ENCODE measurements at regions of chr20 and their contacts with region 1.

Region 1: DNA sequence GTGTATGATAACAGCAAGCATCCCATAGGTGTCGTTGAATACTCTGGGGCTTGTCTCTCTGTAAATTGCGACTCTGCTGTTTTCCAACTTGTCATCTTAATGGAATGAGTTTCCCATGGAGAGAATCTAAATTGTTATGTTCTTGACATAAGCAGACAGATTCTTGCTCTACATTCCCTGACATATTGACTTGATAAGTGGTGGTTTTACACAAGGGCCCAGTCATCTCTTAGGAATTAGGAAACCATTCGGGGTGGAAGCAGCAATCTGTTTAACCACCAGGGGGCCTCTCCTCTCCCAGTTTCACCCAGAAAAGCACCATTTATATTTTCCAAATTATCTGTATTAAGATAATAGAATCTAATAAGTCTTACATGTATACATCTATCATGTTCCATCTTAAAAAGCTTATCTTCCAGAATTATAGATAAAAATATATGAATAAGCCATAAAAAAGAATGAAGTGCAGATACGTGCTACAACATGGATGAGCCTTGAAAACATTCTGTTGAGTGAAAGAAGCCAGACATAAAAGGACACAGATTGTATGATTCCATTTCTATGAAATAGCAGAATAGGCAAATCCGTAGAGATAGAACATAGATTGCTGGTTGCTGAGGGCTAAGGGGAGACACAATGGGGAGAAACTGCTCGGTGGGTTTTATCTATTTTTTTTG is 23.1 kb upstream of the MROH8 start:
- DNase-seq: peak; percentile 87
- H3K4me3 ChIP-seq: no peak overlapping the region
- CTCF ChIP-seq: peak; percentile 86

Region 2: GRCh38 chr20:37251825-37252477 is 49.5 kb after region 1 on chr20:
- in situ Hi-C with region 1: no loop called
- DNase-seq: no peak
- H3K4me3 ChIP-seq: no peak overlapping the region
- CTCF ChIP-seq: no peak

Region 3: GRCh38 chr20:37265152-37265551 is 62.7 kb after region 1 on chr20:
- in situ Hi-C with region 1: loop called (anchors 5 kb)
- DNase-seq: no peak
- H3K4me3 ChIP-seq: no peak overlapping the region
- CTCF ChIP-seq: no peak